Naive thymus-derived CD4-positive, alpha-beta T cell (primary cell): ENCODE measurements at regions of chr4 and their contacts with region 1.

Region 1: GRCh38 chr4:143524211-143524610 is 10.7 kb downstream of the SMARCA5 start:
- DNase-seq: no peak
- ATAC-seq: no peak
- H3K4me3 ChIP-seq: no peak overlapping the region
- H3K4me3 Mint-ChIP-seq: no peak overlapping the region
- H3K27ac ChIP-seq: no peak overlapping the region
- H3K27ac Mint-ChIP-seq: peak overlapping the region in 1 of 9 donors; percentile 69
- H3K4me1 ChIP-seq: peaks cover 0 to 8% of the 10 kb centered on the region in 2 donors
- H3K4me1 Mint-ChIP-seq: peaks cover 27 to 63% (median 59%) of the 10 kb centered on the region in 7 donors
- H3K27me3 ChIP-seq: no peaks in the 10 kb centered on the region
- H3K27me3 Mint-ChIP-seq: no peaks in the 10 kb centered on the region

Region 2: GRCh38 chr4:143538979-143539669 is 14.9 kb after region 1 on chr4:
- CTCF ChIA-PET with region 1: no interaction called
- POLR2A ChIA-PET with region 1: no interaction called
- intact Hi-C with region 1: loop called in 1 of 2 experiments (anchors 2 kb)
- DNase-seq: no peak
- ATAC-seq: peak; percentile 33
- H3K4me3 ChIP-seq: no peak overlapping the region
- H3K4me3 Mint-ChIP-seq: no peak overlapping the region
- H3K27ac ChIP-seq: no peak overlapping the region
- H3K27ac Mint-ChIP-seq: peak overlapping the region in 4 of 9 donors; percentile 13 to 64 (median 30)
- H3K4me1 ChIP-seq: no peaks in the 10 kb centered on the region
- H3K4me1 Mint-ChIP-seq: peaks cover 0 to 27% (median 19%) of the 10 kb centered on the region in 7 donors
- H3K27me3 ChIP-seq: no peaks in the 10 kb centered on the region
- H3K27me3 Mint-ChIP-seq: no peaks in the 10 kb centered on the region